ENCODE measurements at regions of chr7 and their contacts with region 1.

Region 1: DNA sequence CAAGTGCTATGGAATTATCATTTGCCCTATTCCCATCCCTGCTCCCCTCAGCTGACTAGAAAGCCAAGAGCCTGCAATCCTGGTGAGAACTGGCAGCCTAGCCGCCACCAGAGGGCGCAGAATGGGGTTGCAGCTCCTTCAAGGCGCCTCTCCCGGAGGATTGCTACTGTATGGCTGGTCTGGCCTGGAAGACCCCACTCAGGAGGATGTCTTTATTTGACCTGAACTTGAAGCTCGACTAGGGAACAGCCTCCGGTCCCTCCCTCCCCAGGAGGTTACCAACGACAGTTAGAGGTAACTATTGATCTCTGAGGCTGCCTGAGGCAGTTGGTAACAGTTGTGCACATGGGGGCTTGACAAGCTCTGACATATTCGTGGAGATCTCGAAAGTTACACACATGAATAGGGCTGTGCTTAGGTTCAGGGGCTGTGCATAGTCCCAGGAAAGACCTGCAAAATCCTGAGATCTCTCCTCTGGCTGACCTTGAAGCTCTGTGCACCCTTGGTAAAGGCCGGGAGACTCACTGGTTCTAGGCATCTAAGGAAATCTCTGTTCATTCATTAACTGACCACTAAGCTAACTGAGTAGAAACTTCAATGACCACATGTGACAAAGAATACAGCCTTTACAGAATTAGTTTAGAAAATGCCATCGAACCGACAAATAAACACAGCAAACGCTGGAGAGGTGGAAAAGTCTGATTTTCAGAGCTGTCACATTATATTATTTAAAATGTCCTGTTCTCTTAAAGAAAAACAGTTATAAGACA is 65.7 kb downstream of the TSPAN12 start:
- DNase-seq: peak; percentile 72
- ATAC-seq: peak; percentile 71
- H3K4me3 Mint-ChIP-seq: no peak overlapping the region
- H3K27ac Mint-ChIP-seq: no peak overlapping the region
- H3K4me1 Mint-ChIP-seq: no peaks in the 10 kb centered on the region
- H3K27me3 Mint-ChIP-seq: peaks cover 5% of the 10 kb centered on the region
- CTCF ChIP-seq: peak; percentile 89

Region 2: DNA sequence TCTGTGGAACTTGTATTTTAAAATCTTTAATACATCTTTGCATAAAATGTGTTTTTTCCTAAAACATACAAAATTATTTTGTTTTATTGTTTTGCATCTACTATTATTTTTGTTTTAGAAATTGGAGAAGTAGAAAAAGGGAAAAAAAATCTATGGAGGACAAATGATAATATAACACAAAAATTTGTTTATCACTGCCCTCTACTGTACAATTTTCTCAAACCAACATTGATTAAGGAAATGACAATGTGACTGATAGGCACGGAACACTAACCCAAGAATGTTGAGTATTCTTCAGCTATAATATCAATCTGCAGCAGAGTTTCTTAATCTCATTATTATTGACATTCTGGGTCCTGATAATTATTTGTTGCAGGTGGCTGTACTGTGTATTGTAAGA is 148.8 kb after region 1 on chr7:
- CTCF ChIA-PET with region 1: interaction called, 3 read pairs
- POLR2A ChIA-PET with region 1: no interaction called
- intact Hi-C with region 1: loop called (anchors 5 kb)
- DNase-seq: no peak
- ATAC-seq: no peak
- H3K4me3 Mint-ChIP-seq: no peak overlapping the region
- H3K27ac Mint-ChIP-seq: no peak overlapping the region
- H3K4me1 Mint-ChIP-seq: no peaks in the 10 kb centered on the region
- H3K27me3 Mint-ChIP-seq: no peaks in the 10 kb centered on the region
- CTCF ChIP-seq: peak; percentile 37

Region 3: GRCh38 chr7:121081327-121081936 is 289.2 kb after region 1 on chr7:
- CTCF ChIA-PET with region 1: interaction called, 12 read pairs
- POLR2A ChIA-PET with region 1: no interaction called
- intact Hi-C with region 1: no loop called
- DNase-seq: no peak
- ATAC-seq: peak; percentile 80
- H3K4me3 Mint-ChIP-seq: no peak overlapping the region
- H3K27ac Mint-ChIP-seq: no peak overlapping the region
- H3K4me1 Mint-ChIP-seq: no peaks in the 10 kb centered on the region
- H3K27me3 Mint-ChIP-seq: peaks cover 3% of the 10 kb centered on the region
- CTCF ChIP-seq: peak; percentile 71